Activated naive CD4-positive, alpha-beta T cell treated with anti-CD3 and anti-CD28 coated beads for 36 hours (primary cell): ENCODE measurements at regions of chr5 and their contacts with region 1.

Region 1: DNA sequence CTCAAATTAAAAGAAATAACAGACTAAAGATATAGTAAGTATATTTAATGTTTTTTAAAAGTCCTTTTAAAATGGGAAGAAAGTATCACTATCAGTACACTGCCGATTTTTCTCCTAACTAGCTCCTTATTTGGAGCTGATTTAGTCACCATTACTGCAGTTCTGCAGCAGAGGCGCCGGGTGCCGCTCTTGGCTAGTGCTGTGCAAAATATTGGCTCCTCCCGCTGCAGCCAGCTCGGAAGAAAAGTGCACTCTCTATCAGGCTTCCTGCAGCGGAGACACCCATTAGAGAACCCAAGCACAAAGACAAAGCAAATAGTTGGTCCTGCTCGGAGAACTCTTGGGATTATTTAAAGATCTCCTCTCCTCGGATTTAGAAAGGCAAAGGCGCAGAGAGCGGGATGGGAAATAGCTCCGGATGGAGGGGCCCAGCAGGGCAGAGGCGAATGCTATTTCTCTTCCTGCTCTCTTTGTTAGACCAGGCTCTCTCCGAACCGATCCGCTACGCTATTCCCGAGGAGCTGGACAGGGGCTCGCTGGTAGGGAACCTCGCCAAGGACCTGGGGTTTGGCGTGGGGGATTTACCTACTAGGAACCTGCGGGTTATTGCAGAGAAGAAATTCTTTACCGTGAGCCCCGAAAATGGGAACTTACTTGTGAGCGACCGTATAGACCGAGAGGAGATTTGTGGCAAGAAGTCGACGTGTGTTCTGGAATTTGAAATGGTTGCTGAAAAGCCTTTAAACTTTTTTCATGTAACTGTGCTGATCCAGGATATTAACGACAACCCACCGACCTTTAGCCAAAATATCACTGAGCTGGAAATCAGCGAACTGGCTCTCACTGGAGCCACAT is at the start of gene PCDHGB3:
- DNase-seq: peak; percentile 47
- H3K4me3 Mint-ChIP-seq: peak within 1 kb of the TSS; percentile 69
- H3K27ac Mint-ChIP-seq: no peak within 1 kb of the TSS
- H3K4me1 Mint-ChIP-seq: peaks cover 4% of the 10 kb centered on the region
- H3K27me3 Mint-ChIP-seq: peaks cover 68% of the 10 kb centered on the region
- total RNA-seq, gene PCDHGB3: 0.07 TPM in 1 of 2 experiments, not detected in the other

Region 2: GRCh38 chr5:140103154-140103553 is 1267.1 kb before region 1 on chr5:
- CTCF ChIA-PET with region 1: no interaction called
- intact Hi-C with region 1: no loop called
- DNase-seq: no peak
- H3K4me3 Mint-ChIP-seq: no peak overlapping the region
- H3K27ac Mint-ChIP-seq: no peak overlapping the region
- H3K4me1 Mint-ChIP-seq: peaks cover 15% of the 10 kb centered on the region
- H3K27me3 Mint-ChIP-seq: no peaks in the 10 kb centered on the region

Region 3: DNA sequence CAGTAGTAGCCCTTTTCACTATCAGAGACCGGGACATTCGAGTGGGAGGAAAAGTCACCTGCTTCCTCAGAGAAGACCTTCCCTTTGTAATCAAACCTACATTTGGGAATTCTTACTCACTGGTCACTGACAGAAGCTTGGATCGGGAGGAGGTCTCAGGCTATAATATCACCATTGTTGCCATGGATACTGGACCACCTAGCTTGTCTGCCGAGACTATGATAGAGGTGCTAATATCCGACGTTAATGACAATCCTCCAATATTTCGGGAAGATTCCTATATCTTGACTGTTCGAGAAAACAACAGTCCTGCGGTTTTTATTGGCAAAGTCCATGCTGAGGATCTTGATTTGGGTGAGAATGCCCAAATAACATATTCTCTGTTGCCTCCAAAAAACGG is 317.7 kb before region 1 on chr5:
- CTCF ChIA-PET with region 1: no interaction called
- intact Hi-C with region 1: no loop called
- DNase-seq: no peak
- H3K4me3 Mint-ChIP-seq: no peak overlapping the region
- H3K27ac Mint-ChIP-seq: no peak overlapping the region
- H3K4me1 Mint-ChIP-seq: peaks cover 8% of the 10 kb centered on the region
- H3K27me3 Mint-ChIP-seq: peaks cover 44% of the 10 kb centered on the region

Region 4: DNA sequence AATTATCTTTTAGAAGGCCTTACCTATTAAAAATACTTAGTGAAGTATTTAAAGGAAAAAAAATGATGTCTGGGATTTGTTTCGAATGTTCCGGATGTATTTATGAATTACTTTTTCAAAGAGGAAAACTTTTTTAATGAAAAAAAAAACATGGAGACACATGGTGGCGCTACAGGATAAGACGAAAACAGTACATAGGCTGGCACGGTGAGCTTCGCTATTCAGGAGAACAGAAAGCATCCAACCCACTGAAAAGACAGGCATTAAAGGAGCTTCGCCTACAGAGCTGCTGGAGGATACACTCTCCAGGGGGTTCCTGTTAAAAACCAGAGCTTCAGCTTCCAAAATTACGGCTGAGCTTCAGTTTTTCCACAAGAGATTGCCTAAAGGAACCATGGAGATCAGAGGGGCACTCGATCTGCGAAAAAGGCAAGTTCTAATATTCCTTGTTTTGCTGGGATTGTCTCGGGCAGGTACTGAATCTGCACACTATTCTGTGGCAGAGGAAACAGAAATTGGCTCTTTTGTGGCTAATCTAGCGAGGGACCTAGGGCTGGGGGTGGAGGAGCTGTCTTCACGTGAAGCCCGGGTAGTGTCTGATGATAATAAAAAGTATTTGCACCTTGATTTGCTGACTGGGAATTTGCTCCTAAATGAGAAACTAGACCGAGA is 147.0 kb before region 1 on chr5 and contains the start of gene PCDHB14:
- CTCF ChIA-PET with region 1: no interaction called
- intact Hi-C with region 1: loop called (anchors 10 kb)
- DNase-seq: no peak
- H3K4me3 Mint-ChIP-seq: no peak within 1 kb of the TSS
- H3K27ac Mint-ChIP-seq: no peak within 1 kb of the TSS
- H3K4me1 Mint-ChIP-seq: peaks cover 4% of the 10 kb centered on the region
- H3K27me3 Mint-ChIP-seq: peaks cover 56% of the 10 kb centered on the region
- total RNA-seq, gene PCDHB14: not detected

Region 5: GRCh38 chr5:141298376-141298775 is 71.8 kb before region 1 on chr5:
- CTCF ChIA-PET with region 1: no interaction called
- intact Hi-C with region 1: no loop called
- DNase-seq: no peak
- H3K4me3 Mint-ChIP-seq: no peak overlapping the region
- H3K27ac Mint-ChIP-seq: no peak overlapping the region
- H3K4me1 Mint-ChIP-seq: no peaks in the 10 kb centered on the region
- H3K27me3 Mint-ChIP-seq: no peaks in the 10 kb centered on the region

Region 6: DNA sequence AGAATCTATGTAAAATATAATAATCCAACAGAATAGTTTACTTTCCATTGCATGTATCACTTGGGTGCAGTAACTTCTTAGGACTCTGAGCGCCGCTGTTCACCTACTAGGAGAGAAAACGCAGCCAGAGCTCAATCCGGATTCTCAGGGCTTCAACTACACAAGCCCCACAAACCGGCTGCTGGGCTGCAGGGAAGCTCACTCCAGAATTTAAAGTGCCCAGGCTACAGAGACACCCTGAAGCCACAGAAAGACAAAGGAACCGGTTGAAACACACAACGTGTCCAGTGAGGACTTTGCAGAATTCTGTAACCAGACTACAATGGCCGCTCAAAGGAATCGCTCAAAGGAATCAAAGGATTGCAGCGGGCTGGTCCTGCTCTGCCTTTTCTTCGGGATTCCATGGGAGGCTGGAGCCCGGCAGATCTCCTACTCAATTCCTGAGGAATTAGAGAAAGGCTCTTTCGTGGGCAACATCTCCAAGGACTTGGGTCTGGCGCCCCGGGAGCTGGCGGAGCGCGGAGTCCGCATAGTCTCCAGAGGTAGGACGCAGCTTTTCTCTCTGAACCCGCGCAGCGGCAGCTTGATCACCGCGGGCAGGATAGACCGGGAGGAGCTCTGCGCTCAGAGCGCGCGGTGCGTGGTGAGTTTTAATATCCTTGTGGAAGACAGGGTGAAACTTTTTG is 42.8 kb after region 1 on chr5 and contains the start of gene PCDHGA10:
- CTCF ChIA-PET with region 1: no interaction called
- intact Hi-C with region 1: loop called (anchors 5 kb)
- DNase-seq: peak; percentile 73
- H3K4me3 Mint-ChIP-seq: peak within 1 kb of the TSS; percentile 78
- H3K27ac Mint-ChIP-seq: no peak within 1 kb of the TSS
- H3K4me1 Mint-ChIP-seq: peaks cover 16% of the 10 kb centered on the region
- H3K27me3 Mint-ChIP-seq: peaks cover 69% of the 10 kb centered on the region
- total RNA-seq, gene PCDHGA10: 0.05 TPM in 1 of 2 experiments, not detected in the other

Region 7: GRCh38 chr5:141420855-141421496 is 50.8 kb after region 1 on chr5 and contains the start of gene PCDHGA11:
- CTCF ChIA-PET with region 1: interaction called, 3 read pairs
- intact Hi-C with region 1: loop called (anchors 5 kb)
- DNase-seq: peak; percentile 71
- H3K4me3 Mint-ChIP-seq: peak within 1 kb of the TSS; percentile 77
- H3K27ac Mint-ChIP-seq: no peak within 1 kb of the TSS
- H3K4me1 Mint-ChIP-seq: peaks cover 3% of the 10 kb centered on the region
- H3K27me3 Mint-ChIP-seq: peaks cover 69% of the 10 kb centered on the region
- total RNA-seq, gene PCDHGA11: 0.10 to 0.17 TPM